H1 (cell line): ENCODE measurements at regions of chr12 and their contacts with region 1.

Region 1: DNA sequence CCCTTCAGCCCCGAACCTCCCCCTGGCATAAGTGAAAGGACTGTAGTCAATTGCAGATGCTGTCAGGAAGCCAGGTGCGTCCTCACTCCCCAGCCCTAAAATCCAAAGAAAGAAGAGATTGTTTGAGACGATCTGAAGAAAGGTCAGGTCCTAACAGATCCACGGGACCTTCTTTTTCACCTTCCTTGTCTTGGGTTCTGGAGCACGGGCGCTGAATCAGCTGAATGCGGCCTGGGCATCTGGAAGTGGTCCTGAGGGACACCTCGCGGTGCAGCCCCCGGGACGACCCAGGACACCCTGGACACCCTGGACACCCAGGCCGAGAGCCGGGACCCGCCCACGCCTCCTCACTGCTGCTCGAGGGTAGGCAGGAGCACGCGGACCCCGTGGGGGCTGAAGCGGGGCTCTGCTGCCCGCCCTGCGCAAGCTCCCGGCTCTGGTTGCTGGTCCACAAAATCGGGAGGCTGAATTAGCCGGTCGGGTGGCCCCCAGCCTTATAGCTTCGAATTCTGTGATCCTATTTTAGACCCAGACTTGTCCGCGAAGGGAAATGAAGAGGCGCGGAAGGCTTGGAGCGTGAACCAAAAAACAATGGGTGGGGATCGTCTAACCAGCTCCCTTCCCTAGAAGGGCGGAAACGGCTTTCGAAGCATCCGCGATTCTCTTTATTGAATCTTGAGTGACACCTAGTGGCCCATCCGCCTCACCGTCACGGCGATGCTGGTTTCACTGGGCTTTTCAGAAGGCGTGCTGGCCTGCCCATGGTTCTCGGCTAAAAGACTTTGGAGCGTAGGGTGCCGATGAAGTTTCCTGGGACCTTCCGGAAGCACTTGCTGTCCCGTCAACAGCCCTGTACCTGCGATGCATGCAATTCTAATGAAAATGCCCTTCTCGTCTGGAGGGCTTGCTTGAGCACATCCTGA is 46.4 kb upstream of the PLXNC1 start:
- DNase-seq: peak; percentile 82 to 89
- H3K4me3 ChIP-seq: peak overlapping the region; percentile 14 to 68 (median 53)
- H3K27ac ChIP-seq: no peak overlapping the region
- H3K4me1 ChIP-seq: peaks cover 0 to 4% (median 1%) of the 10 kb centered on the region in 4 experiments; a peak in 4 of 7 replicates
- H3K27me3 ChIP-seq: peaks cover 0 to 12% (median 8%) of the 10 kb centered on the region in 4 experiments; a peak in 5 of 7 replicates
- CTCF ChIP-seq: peak; percentile 80 to 90 (median 88)
- EP300 ChIP-seq: no peak
- POLR2A ChIP-seq: no peak
- RAD21 ChIP-seq: peak; percentile 91 to 96

Region 2: DNA sequence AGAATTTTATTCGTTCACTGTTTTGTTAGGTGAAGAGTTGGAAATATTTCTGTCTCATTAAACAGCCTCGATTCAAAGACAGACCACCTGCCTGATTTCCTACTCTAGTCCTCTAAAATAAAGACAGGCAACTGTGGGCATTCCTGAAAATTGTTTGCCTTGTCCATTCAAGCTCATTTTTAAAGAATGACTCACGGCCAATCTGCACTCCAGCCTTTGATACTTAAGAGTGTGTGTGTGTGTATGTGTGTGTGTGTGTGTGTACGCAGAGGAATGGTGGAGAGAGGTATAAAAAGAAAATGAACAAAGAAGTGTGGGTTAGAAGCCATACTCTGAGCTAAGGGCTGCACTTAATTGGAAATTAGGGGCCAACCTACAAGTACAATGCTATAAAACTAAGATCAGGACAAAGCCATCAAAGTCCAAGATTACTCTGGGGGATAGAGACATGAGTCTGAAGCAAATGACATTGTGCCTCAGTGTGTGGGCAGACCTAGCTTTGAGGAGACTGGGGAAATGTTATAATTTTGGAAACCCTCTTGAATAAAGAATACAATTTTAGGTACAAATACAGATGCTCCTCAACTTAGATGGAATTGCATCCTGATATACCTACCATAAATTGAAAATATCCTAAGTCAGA is 575.1 kb before region 1 on chr12:
- CTCF ChIA-PET with region 1: interaction called, 19 read pairs
- POLR2A ChIA-PET with region 1: no interaction called
- DNase-seq: no peak
- H3K4me3 ChIP-seq: no peak overlapping the region
- H3K27ac ChIP-seq: no peak overlapping the region
- H3K4me1 ChIP-seq: no peaks in the 10 kb centered on the region
- H3K27me3 ChIP-seq: no peaks in the 10 kb centered on the region
- CTCF ChIP-seq: no peak
- EP300 ChIP-seq: no peak
- POLR2A ChIP-seq: no peak
- RAD21 ChIP-seq: no peak

Region 3: GRCh38 chr12:93773122-93773871 is 328.7 kb before region 1 on chr12:
- CTCF ChIA-PET with region 1: interaction called, 84 read pairs
- POLR2A ChIA-PET with region 1: no interaction called
- DNase-seq: no peak
- H3K4me3 ChIP-seq: no peak overlapping the region
- H3K27ac ChIP-seq: no peak overlapping the region
- H3K4me1 ChIP-seq: peaks cover 0 to 8% (median 0%) of the 10 kb centered on the region in 4 experiments; a peak in 1 of 7 replicates
- H3K27me3 ChIP-seq: no peaks in the 10 kb centered on the region
- CTCF ChIP-seq: no peak
- EP300 ChIP-seq: no peak
- POLR2A ChIP-seq: no peak
- RAD21 ChIP-seq: no peak

Region 4: GRCh38 chr12:93839064-93839463 is 262.9 kb before region 1 on chr12:
- CTCF ChIA-PET with region 1: interaction called, 11 read pairs
- POLR2A ChIA-PET with region 1: no interaction called
- DNase-seq: no peak
- H3K4me3 ChIP-seq: no peak overlapping the region
- H3K27ac ChIP-seq: no peak overlapping the region
- H3K4me1 ChIP-seq: peaks cover 0 to 2% (median 1%) of the 10 kb centered on the region in 4 experiments; a peak in 2 of 7 replicates
- H3K27me3 ChIP-seq: no peaks in the 10 kb centered on the region
- CTCF ChIP-seq: no peak
- EP300 ChIP-seq: no peak
- POLR2A ChIP-seq: no peak
- RAD21 ChIP-seq: peak; percentile 30 to 38; a peak in 3 of 4 replicates

Region 5: DNA sequence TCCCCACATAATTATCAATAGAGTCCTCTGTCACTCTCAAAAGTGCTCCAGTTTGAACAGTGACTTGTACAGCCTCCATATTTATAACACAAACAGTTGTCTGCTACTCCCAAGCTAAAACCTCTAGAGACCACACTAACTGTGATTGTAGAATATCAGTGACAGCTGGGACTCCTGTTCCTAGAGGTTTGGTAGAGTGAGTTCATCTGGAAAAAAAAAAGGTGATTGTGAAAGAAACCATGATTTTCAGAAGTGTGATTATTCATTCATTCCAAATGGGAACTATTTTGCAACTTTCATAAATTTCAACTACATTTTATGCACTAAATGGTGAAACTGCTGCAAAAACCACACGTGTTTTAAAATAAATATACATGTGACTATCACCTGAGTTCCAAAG is 81.7 kb before region 1 on chr12:
- CTCF ChIA-PET with region 1: interaction called, 14 read pairs
- POLR2A ChIA-PET with region 1: no interaction called
- DNase-seq: no peak
- H3K4me3 ChIP-seq: no peak overlapping the region
- H3K27ac ChIP-seq: no peak overlapping the region
- H3K4me1 ChIP-seq: no peaks in the 10 kb centered on the region
- H3K27me3 ChIP-seq: no peaks in the 10 kb centered on the region
- CTCF ChIP-seq: no peak
- EP300 ChIP-seq: no peak
- POLR2A ChIP-seq: no peak
- RAD21 ChIP-seq: no peak

Region 6: GRCh38 chr12:94207849-94208621 is 106.0 kb after region 1 on chr12:
- CTCF ChIA-PET with region 1: no interaction called
- POLR2A ChIA-PET with region 1: no interaction called
- DNase-seq: no peak
- H3K4me3 ChIP-seq: no peak overlapping the region
- H3K27ac ChIP-seq: no peak overlapping the region
- H3K4me1 ChIP-seq: peaks cover 0 to 8% (median 0%) of the 10 kb centered on the region in 4 experiments; a peak in 2 of 7 replicates
- H3K27me3 ChIP-seq: no peaks in the 10 kb centered on the region
- CTCF ChIP-seq: no peak
- EP300 ChIP-seq: no peak
- POLR2A ChIP-seq: no peak
- RAD21 ChIP-seq: no peak